PC-3 (cell line): ENCODE measurements at regions of chr21 and their contacts with region 1.

Region 1: DNA sequence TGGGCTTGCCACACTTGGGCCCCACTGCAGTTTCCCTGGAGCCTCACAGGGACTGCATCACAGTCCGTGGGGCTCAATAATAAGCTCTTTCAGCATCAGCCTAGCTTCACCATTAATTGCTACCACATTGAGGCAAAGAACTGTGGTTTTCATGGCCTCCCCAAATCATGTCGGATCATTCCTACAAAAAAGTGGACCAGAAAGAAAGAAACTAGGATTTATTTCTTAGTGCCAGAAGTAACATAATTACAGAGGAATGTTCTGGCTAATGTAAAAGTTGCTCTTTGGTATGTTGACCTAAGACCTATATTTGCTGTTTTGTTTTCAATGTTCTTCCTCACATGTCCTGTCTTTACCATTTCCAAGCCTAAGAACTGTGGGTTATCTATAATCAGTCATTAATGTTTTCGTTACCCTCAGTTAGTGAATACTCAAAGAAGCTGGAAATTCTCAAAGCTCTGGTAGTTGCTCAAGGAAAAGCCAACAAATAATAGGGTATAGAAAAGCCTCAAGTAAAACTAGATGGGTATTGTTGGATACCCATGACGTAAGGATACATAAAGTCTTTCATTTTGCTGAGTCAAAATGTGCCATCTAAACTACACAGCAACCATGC is 173.9 kb downstream of the LTN1 start:
- DNase-seq: no peak
- ATAC-seq: no peak
- H3K4me3 ChIP-seq: no peak overlapping the region
- H3K27ac ChIP-seq: no peak overlapping the region
- H3K4me1 ChIP-seq: peaks cover 10% of the 10 kb centered on the region
- H3K27me3 ChIP-seq: no peaks in the 10 kb centered on the region
- CTCF ChIP-seq: no peak

Region 2: GRCh38 chr21:28857752-28858151 is 39.0 kb after region 1 on chr21:
- CTCF ChIA-PET with region 1: no interaction called
- POLR2A ChIA-PET with region 1: interaction called, 23 read pairs
- intact Hi-C with region 1: no loop called
- DNase-seq: no peak
- ATAC-seq: no peak
- H3K4me3 ChIP-seq: no peak overlapping the region
- H3K27ac ChIP-seq: no peak overlapping the region
- H3K4me1 ChIP-seq: no peaks in the 10 kb centered on the region
- H3K27me3 ChIP-seq: no peaks in the 10 kb centered on the region
- CTCF ChIP-seq: no peak